MCF 10A (cell line): ENCODE measurements at regions of chr20 and their contacts with region 1.

Region 1: DNA sequence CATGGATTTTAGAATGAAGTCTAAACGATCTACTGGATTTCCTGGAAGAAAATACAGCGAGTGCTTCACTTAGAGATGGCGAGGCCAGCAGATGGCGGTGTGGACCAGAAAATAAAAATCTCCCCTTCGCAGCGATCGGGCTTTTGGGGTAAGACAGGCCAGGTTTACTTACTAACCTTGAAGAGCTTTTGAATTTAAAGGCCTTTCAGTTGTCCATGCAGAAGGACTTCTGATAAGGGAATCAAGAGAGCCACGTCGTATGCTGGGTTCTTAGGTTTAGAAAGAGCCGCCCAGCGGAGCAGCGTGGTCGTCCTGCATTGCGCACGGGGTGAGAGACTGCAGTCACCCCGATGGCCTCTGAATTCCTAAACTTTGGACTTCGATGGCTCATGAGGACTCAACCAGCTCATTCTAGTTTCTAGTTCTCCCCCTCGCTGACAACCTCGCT is 125.2 kb upstream of the RALGAPA2 start:
- DNase-seq: peak; percentile 50
- H3K4me3 Mint-ChIP-seq: no peak overlapping the region
- H3K27ac Mint-ChIP-seq: no peak overlapping the region
- H3K4me1 Mint-ChIP-seq: no peaks in the 10 kb centered on the region
- H3K27me3 Mint-ChIP-seq: peaks cover 17% of the 10 kb centered on the region
- CTCF ChIP-seq: peak; percentile 79

Region 2: GRCh38 chr20:20658871-20659431 is 178.6 kb before region 1 on chr20:
- CTCF ChIA-PET with region 1: interaction called, 22 read pairs
- POLR2A ChIA-PET with region 1: interaction called, 3 read pairs
- intact Hi-C with region 1: no loop called
- DNase-seq: no peak
- H3K4me3 Mint-ChIP-seq: no peak overlapping the region
- H3K27ac Mint-ChIP-seq: no peak overlapping the region
- H3K4me1 Mint-ChIP-seq: peaks cover 4% of the 10 kb centered on the region
- H3K27me3 Mint-ChIP-seq: no peaks in the 10 kb centered on the region
- CTCF ChIP-seq: no peak

Region 3: DNA sequence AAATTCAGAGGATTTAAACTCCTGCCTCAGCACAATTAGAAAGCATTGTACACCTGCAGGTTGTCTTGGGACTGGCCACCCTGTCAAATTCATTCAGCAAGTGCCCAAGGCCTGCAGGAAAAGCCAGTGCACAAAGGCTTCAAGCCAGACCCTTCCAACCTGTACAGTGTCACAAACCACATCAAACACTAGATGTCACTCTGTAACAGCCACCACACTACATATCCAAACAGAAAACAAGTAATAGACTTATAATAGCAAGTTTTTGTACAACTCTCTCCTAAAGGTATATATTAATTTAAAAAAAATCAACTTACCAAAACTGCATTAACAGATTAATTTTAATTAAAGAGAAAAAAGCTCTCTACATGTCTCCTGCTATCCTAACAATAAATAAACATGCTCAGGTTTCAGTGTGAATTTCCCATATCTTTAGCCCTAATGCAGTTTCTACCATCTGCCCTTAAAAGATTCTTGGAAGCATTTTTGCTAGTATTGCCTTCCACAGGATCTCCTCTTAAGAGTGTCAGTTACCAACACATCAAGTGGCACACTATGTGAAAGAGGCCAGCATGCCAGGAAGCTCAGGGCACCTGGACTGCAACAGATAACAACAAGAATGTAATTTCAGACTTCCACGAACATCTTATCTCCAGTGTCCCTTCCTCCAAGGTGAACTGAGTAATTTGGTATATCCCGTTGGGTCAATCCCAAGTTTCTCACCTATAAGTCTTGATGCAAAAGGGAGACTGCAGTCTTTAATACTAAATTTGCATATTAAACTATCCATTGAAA is 172.6 kb before region 1 on chr20:
- CTCF ChIA-PET with region 1: interaction called, 25 read pairs
- POLR2A ChIA-PET with region 1: interaction called, 3 read pairs
- intact Hi-C with region 1: no loop called
- DNase-seq: peak; percentile 51
- H3K4me3 Mint-ChIP-seq: no peak overlapping the region
- H3K27ac Mint-ChIP-seq: no peak overlapping the region
- H3K4me1 Mint-ChIP-seq: no peaks in the 10 kb centered on the region
- H3K27me3 Mint-ChIP-seq: no peaks in the 10 kb centered on the region
- CTCF ChIP-seq: peak; percentile 75

Region 4: GRCh38 chr20:20849161-20849560 is 11.6 kb after region 1 on chr20:
- CTCF ChIA-PET with region 1: interaction called, 61 read pairs
- POLR2A ChIA-PET with region 1: no interaction called
- intact Hi-C with region 1: no loop called
- DNase-seq: no peak
- H3K4me3 Mint-ChIP-seq: no peak overlapping the region
- H3K27ac Mint-ChIP-seq: no peak overlapping the region
- H3K4me1 Mint-ChIP-seq: no peaks in the 10 kb centered on the region
- H3K27me3 Mint-ChIP-seq: no peaks in the 10 kb centered on the region
- CTCF ChIP-seq: no peak

Region 5: GRCh38 chr20:21490095-21490494 is 652.5 kb after region 1 on chr20:
- CTCF ChIA-PET with region 1: interaction called, 13 read pairs
- POLR2A ChIA-PET with region 1: no interaction called
- intact Hi-C with region 1: no loop called
- DNase-seq: no peak
- H3K4me3 Mint-ChIP-seq: no peak overlapping the region
- H3K27ac Mint-ChIP-seq: no peak overlapping the region
- H3K4me1 Mint-ChIP-seq: no peaks in the 10 kb centered on the region
- H3K27me3 Mint-ChIP-seq: peaks cover 15% of the 10 kb centered on the region
- CTCF ChIP-seq: peak; percentile 18

Region 6: DNA sequence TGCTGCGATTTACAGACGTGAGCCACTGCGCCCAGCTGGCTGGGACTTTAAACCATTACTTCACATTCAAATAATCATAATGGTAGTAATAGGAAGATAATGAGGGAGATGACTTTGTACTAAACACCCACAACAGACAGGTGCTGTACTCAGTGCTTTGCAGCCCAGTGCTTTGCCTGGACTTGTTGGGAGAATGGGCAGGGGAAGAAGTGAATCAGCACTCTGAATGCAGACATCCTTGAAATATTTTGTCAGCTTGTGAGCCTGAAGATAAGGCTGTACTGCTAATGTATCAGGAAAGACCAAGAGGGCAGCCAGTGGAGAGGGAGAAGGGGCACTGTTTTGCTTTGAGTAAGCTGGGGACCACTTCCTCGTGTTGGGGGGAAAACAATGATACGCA is 658.9 kb after region 1 on chr20:
- CTCF ChIA-PET with region 1: interaction called, 130 read pairs
- POLR2A ChIA-PET with region 1: interaction called, 4 read pairs
- intact Hi-C with region 1: no loop called
- DNase-seq: peak; percentile 34
- H3K4me3 Mint-ChIP-seq: no peak overlapping the region
- H3K27ac Mint-ChIP-seq: peak overlapping the region; percentile 91
- H3K4me1 Mint-ChIP-seq: peaks cover 6% of the 10 kb centered on the region
- H3K27me3 Mint-ChIP-seq: peaks cover 13% of the 10 kb centered on the region
- CTCF ChIP-seq: no peak